ENCODE measurements at regions of chr7 and their contacts with region 1.

Region 1: GRCh38 chr7:140479062-140479738 is at the start of gene MKRN1:
- DNase-seq: peak; percentile 94
- H3K4me3 Mint-ChIP-seq: peak within 1 kb of the TSS; percentile 96
- H3K27ac Mint-ChIP-seq: peak within 1 kb of the TSS; percentile 89
- H3K4me1 Mint-ChIP-seq: peaks cover 25% of the 10 kb centered on the region
- H3K27me3 Mint-ChIP-seq: no peaks in the 10 kb centered on the region
- total RNA-seq, gene MKRN1: 119 to 122 TPM

Region 2: GRCh38 chr7:140358412-140359051 is 120.7 kb before region 1 on chr7:
- CTCF ChIA-PET with region 1: interaction called, 14 read pairs
- POLR2A ChIA-PET with region 1: interaction called, 14 read pairs
- DNase-seq: peak; percentile 60
- H3K4me3 Mint-ChIP-seq: peak overlapping the region; percentile 77
- H3K27ac Mint-ChIP-seq: peak overlapping the region; percentile 96
- H3K4me1 Mint-ChIP-seq: peaks cover 35% of the 10 kb centered on the region
- H3K27me3 Mint-ChIP-seq: no peaks in the 10 kb centered on the region

Region 3: DNA sequence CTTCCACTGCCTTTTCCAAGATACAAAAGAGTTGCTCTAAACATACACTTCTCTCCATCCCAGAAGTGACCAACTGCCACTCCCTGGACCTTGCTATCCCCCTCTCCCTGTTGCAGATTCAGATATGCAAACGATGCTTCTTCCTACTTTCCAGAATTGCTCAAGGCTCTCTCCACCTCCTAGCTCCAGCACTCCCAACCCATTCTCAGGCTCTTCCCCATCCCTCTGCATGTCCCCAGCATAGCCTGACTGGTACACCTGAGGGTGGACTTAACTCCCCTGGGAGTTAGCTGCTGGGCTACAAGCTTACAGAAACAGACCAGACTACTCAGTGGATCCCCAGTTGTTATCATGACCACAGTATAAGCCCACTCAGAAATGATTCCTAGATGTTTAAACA is 27.5 kb before region 1 on chr7:
- CTCF ChIA-PET with region 1: interaction called, 5 read pairs
- POLR2A ChIA-PET with region 1: interaction called, 11 read pairs
- DNase-seq: no peak
- H3K4me3 Mint-ChIP-seq: no peak overlapping the region
- H3K27ac Mint-ChIP-seq: no peak overlapping the region
- H3K4me1 Mint-ChIP-seq: peaks cover 69% of the 10 kb centered on the region
- H3K27me3 Mint-ChIP-seq: no peaks in the 10 kb centered on the region

Region 4: DNA sequence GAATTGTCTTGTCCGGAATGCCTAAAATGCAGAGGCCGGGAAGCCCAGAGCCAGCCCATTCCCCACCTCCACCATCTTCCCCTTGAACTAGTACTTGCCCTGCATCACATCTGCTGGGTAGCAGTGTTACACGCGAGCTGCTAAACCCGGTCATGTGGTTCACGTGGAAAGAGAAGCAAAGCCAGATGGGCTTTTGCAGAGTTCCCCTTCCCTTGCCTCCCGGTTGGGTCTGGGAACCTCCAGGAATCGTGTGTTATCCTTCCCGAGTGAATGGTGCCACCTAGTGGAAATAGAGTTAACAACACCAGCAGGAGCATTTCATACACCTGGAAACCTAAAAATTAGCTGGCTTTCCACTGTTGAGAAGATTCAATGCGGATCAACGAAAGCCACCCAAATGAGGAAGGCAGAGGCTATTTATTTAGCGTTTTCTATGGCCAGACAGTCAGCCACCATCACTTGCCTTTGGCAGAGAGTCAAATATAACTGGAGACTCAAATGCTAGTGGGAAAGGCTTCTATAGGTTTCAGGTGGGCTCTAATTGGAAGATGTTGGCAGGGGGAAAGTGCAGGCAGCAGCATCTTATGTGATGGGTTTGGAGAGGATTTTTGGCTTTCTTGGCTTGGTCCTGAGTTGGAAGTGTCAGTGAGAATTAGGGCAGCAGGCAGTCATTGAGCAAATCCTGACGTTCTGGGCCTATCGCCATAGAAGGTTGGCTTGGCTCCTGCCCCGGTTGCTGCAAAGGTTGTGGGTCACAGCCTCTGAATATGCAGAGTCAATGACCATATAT is 174.3 kb after region 1 on chr7:
- CTCF ChIA-PET with region 1: interaction called, 16 read pairs
- POLR2A ChIA-PET with region 1: interaction called, 3 read pairs
- DNase-seq: peak; percentile 30
- H3K4me3 Mint-ChIP-seq: no peak overlapping the region
- H3K27ac Mint-ChIP-seq: no peak overlapping the region
- H3K4me1 Mint-ChIP-seq: peaks cover 14% of the 10 kb centered on the region
- H3K27me3 Mint-ChIP-seq: peaks cover 18% of the 10 kb centered on the region

Region 5: GRCh38 chr7:140745266-140746058 is 266.3 kb after region 1 on chr7:
- CTCF ChIA-PET with region 1: no interaction called
- POLR2A ChIA-PET with region 1: no interaction called
- DNase-seq: no peak
- H3K4me3 Mint-ChIP-seq: no peak overlapping the region
- H3K27ac Mint-ChIP-seq: no peak overlapping the region
- H3K4me1 Mint-ChIP-seq: no peaks in the 10 kb centered on the region
- H3K27me3 Mint-ChIP-seq: no peaks in the 10 kb centered on the region

Region 6: GRCh38 chr7:141014524-141015395 is 535.6 kb after region 1 on chr7 and contains the start of gene MRPS33:
- CTCF ChIA-PET with region 1: interaction called, 16 read pairs
- POLR2A ChIA-PET with region 1: interaction called, 34 read pairs
- DNase-seq: peak; percentile 95
- H3K4me3 Mint-ChIP-seq: peak within 1 kb of the TSS; percentile 97
- H3K27ac Mint-ChIP-seq: peak within 1 kb of the TSS; percentile 96
- H3K4me1 Mint-ChIP-seq: peaks cover 38% of the 10 kb centered on the region
- H3K27me3 Mint-ChIP-seq: peaks cover 12% of the 10 kb centered on the region
- total RNA-seq, gene MRPS33: 58.5 to 68.3 TPM